ENCODE measurements at regions of chr5 and their contacts with region 1.

Region 1: GRCh38 chr5:91885291-91886265 is 502.5 kb upstream of the ARRDC3 start:
- DNase-seq: peak in 1 of 2 experiments; percentile 42
- H3K4me3 ChIP-seq: no peak overlapping the region
- H3K27ac ChIP-seq: no peak overlapping the region
- H3K4me1 ChIP-seq: no peaks in the 10 kb centered on the region
- H3K27me3 ChIP-seq: no peaks in the 10 kb centered on the region
- CTCF ChIP-seq: no peak

Region 2: DNA sequence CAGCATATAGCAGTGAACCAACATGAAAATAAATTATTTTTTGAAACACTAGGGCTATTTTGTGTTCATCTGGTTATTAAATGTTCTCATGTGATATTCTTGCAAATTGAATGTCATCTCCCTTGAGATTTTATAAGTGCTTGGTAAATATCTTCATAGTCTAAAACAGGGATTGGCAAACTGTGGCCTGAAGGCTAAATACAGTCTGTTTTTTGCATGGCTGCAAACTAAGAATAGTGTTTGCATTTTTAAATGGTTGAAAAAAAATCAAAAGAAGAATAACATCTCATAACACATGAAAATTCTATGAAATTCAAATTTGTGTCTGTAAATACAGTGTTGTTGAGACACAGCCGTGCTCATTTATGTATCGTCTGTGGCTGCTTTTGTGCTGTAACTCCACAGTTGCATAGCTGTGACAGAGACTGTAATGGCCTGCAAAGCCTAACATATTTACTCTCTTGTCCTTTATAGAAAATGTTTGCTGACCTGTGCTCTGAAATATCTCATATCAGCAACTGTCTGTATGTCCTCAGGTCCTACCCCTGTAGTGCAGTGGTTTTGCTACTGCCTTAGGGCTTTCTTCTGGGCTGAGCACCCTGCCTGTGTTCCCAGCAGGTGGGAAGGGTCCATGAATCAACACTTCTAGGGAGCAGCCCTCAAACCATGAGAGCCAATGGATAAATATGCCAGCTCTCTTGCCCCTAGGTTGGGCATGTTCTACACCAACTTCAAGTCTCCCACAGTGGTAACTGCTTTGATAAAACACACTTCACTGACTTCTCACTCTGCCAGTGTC is 460.7 kb before region 1 on chr5:
- CTCF ChIA-PET with region 1: no interaction called
- POLR2A ChIA-PET with region 1: no interaction called
- intact Hi-C with region 1: no loop called
- DNase-seq: no peak
- H3K4me3 ChIP-seq: no peak overlapping the region
- H3K27ac ChIP-seq: no peak overlapping the region
- H3K4me1 ChIP-seq: no peaks in the 10 kb centered on the region
- H3K27me3 ChIP-seq: no peaks in the 10 kb centered on the region
- CTCF ChIP-seq: no peak

Region 3: GRCh38 chr5:91794856-91795548 is 90.6 kb before region 1 on chr5:
- CTCF ChIA-PET with region 1: no interaction called
- POLR2A ChIA-PET with region 1: no interaction called
- intact Hi-C with region 1: no loop called
- DNase-seq: peak in 1 of 2 experiments; percentile 80
- H3K4me3 ChIP-seq: peak overlapping the region; percentile 18; the same call in 1 of the 2 replicates
- H3K27ac ChIP-seq: peak overlapping the region; percentile 53
- H3K4me1 ChIP-seq: peaks cover 24% of the 10 kb centered on the region
- H3K27me3 ChIP-seq: no peaks in the 10 kb centered on the region
- CTCF ChIP-seq: no peak

Region 4: GRCh38 chr5:91898898-91899297 is 13.3 kb after region 1 on chr5:
- CTCF ChIA-PET with region 1: no interaction called
- POLR2A ChIA-PET with region 1: no interaction called
- intact Hi-C with region 1: loop called (anchors 1 kb)
- DNase-seq: no peak
- H3K4me3 ChIP-seq: no peak overlapping the region
- H3K27ac ChIP-seq: no peak overlapping the region
- H3K4me1 ChIP-seq: no peaks in the 10 kb centered on the region
- H3K27me3 ChIP-seq: no peaks in the 10 kb centered on the region
- CTCF ChIP-seq: no peak